ENCODE measurements at regions of chr17 and their contacts with region 1.

Region 1: DNA sequence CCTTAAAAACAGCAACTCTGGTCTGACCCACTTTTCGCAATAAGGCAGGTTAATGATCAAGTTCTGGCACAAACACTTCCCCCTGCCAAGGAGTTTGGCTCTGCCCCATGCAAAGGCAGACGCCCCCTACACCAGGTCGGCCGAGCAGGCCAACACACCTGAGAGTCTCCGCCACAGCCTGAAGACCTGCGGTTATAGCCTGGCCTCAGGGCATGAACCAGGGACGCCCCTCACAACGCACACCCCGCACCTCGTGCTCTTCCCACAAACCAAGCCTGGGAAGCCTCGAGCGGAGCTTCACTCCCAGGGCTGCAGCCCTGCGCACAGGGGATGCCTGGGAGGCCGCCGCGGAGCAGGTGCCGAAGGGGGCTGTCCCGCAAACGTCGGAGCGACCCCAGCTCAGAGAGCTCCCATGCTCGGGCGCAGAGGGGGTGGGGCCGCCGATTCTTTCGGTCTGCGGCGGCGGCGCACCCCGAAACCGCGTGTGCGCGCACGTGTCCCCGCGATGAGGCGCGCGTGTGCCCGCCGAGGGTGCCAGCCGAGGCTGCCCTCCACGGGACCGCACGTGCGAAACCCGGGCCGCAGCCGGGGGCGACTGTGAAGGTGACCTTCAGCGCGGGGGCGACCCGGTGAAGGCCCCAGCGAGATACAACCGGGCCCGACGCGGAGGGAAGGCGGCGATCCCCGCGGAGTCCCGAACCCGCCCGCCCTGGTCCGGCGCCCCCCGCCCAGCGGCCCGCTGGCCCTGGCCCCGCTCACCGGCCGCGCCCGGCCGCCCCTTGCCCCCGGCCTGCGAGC is 562 bp downstream of the CLUH start:
- DNase-seq: peak; percentile 75
- ATAC-seq: peak; percentile 59
- H3K4me3 ChIP-seq: peak overlapping the region; percentile 75 to 91 (median 82)
- H3K27ac ChIP-seq: peak overlapping the region; percentile 87
- H3K4me1 ChIP-seq: peaks cover 61% of the 10 kb centered on the region
- H3K27me3 ChIP-seq: no peaks in the 10 kb centered on the region; a peak in 1 of 5 replicates
- CTCF ChIP-seq: peak; percentile 28; the same call in 1 of the 2 replicates
- EP300 ChIP-seq: peak in 1 of 2 experiments; percentile 40; a peak in 1 of 4 replicates
- POLR2A ChIP-seq: peak; percentile 87 to 91
- RAD21 ChIP-seq: no peak; the same call in 1 of the 2 replicates

Region 2: DNA sequence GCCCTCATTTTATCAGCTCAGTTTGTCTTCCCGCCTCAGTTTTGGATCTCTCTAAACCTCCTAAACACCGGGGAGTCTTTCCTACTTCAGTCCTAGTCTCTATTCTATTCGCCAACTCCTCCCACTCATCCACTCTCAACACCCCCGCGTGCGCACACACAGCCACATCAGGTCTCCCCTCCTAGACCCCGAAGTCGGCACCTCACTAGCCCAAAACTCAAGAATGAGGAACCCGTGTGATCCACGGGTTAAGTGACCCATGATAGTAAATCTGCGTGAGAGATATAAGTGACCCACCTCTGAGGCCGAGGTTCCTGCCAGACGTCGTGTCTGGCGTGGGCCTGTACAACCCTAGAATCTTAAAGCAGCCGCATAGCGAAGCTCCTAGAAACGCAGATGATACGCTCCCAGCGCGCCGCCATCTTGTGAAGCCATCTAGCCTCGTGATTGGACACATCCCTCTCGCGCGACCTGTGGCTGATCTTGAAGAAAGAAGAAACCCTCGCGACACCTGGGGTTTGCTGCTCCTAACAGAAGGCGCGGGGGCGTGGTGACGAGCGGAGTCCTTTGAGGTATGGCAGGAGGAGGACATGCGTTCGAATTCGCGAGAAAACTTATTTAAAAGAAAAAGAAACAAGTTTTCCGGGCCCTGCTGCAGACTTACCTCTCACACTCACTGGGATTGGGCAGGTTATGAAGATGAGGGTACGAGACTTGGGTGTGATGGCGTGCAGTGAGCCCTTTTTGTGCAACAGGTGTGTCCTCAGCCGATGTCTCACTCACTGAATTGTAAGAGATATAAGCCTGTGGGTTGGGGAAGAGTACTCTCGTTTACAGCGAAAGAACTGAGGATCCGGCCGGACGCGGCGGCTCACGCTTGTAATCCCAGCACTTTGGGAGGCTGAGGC is 199.3 kb before region 1 on chr17 and contains the start of gene METTL16:
- CTCF ChIA-PET with region 1: no interaction called
- POLR2A ChIA-PET with region 1: interaction called, 12 read pairs
- in situ Hi-C with region 1: no loop called
- intact Hi-C with region 1: no loop called
- DNase-seq: peak; percentile 97
- ATAC-seq: peak; percentile 98
- H3K4me3 ChIP-seq: peak within 1 kb of the TSS; percentile 70 to 88 (median 76)
- H3K27ac ChIP-seq: peak within 1 kb of the TSS; percentile 91
- H3K4me1 ChIP-seq: peaks cover 45% of the 10 kb centered on the region
- H3K27me3 ChIP-seq: no peaks in the 10 kb centered on the region; a peak in 1 of 5 replicates
- CTCF ChIP-seq: no peak; the same call in 1 of the 2 replicates
- EP300 ChIP-seq: no peak
- POLR2A ChIP-seq: peak; percentile 80 to 92
- RAD21 ChIP-seq: peak; percentile 15; the same call in 1 of the 2 replicates
- total RNA-seq, gene METTL16: 18.5 and 28.9 TPM in 2 replicates

Region 3: GRCh38 chr17:2547176-2547575 is 163.8 kb before region 1 on chr17:
- CTCF ChIA-PET with region 1: no interaction called
- POLR2A ChIA-PET with region 1: no interaction called
- in situ Hi-C with region 1: no loop called
- intact Hi-C with region 1: no loop called
- DNase-seq: peak; percentile 38
- ATAC-seq: peak; percentile 47; the same call in 2 of the 3 replicates
- H3K4me3 ChIP-seq: no peak overlapping the region
- H3K27ac ChIP-seq: no peak overlapping the region
- H3K4me1 ChIP-seq: peaks cover 46% of the 10 kb centered on the region
- H3K27me3 ChIP-seq: peaks cover 0 to 14% of the 10 kb centered on the region in 2 experiments; a peak in 3 of 5 replicates
- CTCF ChIP-seq: no peak
- EP300 ChIP-seq: no peak
- POLR2A ChIP-seq: no peak
- RAD21 ChIP-seq: no peak

Region 4: DNA sequence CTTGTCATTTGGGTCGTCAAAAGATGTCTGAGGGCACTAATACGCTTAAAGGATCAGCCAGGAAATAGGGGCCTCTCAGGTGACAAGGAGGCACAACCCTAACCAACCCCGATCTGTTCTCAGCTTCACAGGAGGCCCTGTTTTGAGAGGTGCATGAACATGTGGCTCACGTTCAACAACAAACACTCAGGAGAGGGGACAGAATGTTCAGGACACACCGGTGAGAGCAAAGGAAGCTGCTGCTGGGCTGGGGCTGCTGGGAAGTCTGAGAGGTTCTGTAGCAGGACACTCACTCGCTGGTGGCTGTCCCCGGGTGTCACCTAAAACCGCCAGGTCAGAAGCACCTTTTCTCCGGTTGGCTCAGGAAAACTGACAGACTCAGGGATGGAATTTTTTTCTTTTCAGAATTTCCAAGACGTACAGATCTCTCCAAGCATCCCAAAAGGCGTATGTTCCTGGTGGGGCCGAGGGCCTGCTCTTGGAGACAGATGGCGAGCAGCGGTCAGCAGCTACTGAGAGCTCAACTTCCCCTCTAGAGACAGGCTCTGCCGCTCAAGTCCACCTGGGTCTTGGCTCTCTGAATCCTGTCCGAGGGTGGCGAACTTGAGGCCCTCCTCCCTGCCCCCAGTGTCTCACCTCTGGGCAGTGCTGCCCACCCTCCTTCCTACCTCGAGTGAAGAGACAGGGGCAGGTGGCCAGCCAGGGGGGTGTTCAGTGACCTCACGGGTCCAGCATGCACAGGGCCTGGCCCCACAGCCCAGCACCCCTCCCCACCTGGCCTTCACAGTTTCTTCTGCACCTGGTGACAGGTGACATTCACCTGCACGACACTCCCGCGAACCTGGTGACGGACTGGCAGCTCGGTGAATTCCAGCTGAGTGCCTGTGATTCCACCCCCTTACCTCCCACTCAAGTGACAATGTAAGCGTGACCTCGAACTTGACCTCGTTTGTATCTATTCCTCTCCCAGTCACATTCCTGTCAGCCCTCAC is 22.4 kb before region 1 on chr17:
- CTCF ChIA-PET with region 1: no interaction called
- POLR2A ChIA-PET with region 1: interaction called, 19 read pairs
- in situ Hi-C with region 1: no loop called
- intact Hi-C with region 1: no loop called
- DNase-seq: peak; percentile 19
- ATAC-seq: peak; percentile 12
- H3K4me3 ChIP-seq: no peak overlapping the region
- H3K27ac ChIP-seq: no peak overlapping the region
- H3K4me1 ChIP-seq: no peaks in the 10 kb centered on the region
- H3K27me3 ChIP-seq: no peaks in the 10 kb centered on the region
- CTCF ChIP-seq: no peak
- EP300 ChIP-seq: no peak
- POLR2A ChIP-seq: no peak; a peak in 1 of 4 replicates
- RAD21 ChIP-seq: no peak

Region 5: DNA sequence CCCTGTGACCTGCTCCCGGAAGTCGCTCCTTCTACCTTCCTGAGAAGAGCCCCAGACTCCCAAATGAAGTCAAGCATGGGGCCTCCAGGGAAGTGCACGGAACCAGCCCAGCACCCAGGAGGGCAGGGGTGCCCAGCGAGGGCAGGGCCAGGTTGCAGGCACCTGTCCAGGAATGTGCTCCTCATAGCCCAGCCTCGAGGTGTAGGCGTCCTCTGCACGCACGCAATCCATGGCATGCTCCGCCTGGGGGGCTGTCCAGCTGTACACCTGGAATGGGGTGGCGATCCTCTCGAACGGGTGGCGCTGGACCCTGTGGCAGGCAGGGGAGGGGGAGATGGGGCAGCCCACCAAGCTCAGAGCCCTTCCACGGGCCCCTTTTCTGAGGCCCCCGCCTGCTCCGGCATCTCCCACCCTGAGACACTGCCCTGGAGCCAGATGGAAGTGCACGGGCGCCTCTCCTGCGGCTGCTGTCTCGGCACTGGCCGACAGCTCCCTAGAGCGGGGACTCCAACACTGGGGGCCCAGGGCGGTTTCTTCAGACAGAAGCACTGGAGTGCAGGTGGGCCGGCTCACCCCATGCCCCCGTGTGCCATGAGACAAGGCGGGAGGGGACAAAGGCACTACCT is 10.4 kb before region 1 on chr17:
- CTCF ChIA-PET with region 1: no interaction called
- POLR2A ChIA-PET with region 1: interaction called, 11 read pairs
- in situ Hi-C with region 1: no loop called
- intact Hi-C with region 1: no loop called
- DNase-seq: no peak
- ATAC-seq: no peak
- H3K4me3 ChIP-seq: no peak overlapping the region
- H3K27ac ChIP-seq: no peak overlapping the region
- H3K4me1 ChIP-seq: peaks cover 6% of the 10 kb centered on the region; the same call in 1 of the 2 replicates
- H3K27me3 ChIP-seq: no peaks in the 10 kb centered on the region
- CTCF ChIP-seq: no peak
- EP300 ChIP-seq: no peak
- POLR2A ChIP-seq: no peak
- RAD21 ChIP-seq: no peak

Measured in HepG2 (cell line).